Activated T-helper 2 cell treated with anti-CD3 and anti-CD28 coated beads, Interferon-gamma antibody, Interleukin-2, Interleukin-4, amounts not matched to agents 10 μg/mL and 5 μg/mL and 100 μg/mL, durations not matched to agents 14 hours and 24 hours and 36 hours (primary cell): ENCODE measurements at regions of chr6 and their contacts with region 1.

Region 1: GRCh38 chr6:48378884-48379407 is 267.9 kb upstream of the PTCHD4 start:
- DNase-seq: no peak
- H3K4me3 Mint-ChIP-seq: no peak overlapping the region
- H3K27ac Mint-ChIP-seq: no peak overlapping the region
- H3K4me1 Mint-ChIP-seq: no peaks in the 10 kb centered on the region
- H3K27me3 Mint-ChIP-seq: no peaks in the 10 kb centered on the region

Region 2: DNA sequence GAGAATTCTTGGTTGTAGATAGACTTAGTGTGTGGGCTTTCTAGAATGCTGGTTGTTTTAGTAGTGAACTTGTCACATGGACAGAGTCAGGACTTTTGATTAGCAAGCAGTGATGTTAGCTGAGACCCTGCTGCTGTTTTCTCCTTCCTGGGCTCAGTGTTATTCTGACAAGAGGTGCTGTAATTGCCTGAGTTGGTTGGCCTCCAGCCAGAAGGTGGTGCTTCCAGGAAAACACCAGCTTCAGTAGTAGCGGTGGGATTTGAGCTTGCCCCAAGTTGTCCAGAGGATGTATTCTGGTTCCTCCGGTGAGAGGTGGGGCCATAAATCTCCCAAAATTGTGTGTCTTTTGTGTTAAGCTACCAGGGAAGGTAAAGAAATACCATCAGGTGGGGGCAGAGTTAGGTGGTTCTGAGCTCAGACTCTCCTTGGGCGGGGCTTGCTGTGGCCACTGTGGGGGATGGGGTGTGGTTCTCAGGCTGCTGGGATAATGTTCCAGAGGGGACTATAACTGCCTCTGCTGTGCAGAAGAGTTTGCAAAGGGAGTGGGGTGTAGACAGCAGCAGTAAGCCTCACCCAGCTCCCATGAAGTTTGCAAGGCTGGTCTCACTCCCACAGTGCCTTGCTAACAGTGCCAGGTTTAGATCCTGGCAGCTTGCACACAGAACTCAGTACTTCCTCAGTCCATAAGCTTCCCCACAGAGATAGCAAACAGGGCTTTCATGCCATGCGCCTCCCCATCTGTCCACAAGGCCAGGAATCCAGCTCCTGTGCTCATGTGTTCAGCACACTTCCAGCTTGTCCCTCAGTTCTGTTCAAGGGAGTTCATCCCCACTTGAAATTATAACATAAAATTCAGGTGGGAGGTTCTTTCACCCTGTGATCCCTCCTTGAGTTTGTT is 10.4 kb after region 1 on chr6:
- intact Hi-C with region 1: no loop called
- DNase-seq: no peak
- H3K4me3 Mint-ChIP-seq: no peak overlapping the region
- H3K27ac Mint-ChIP-seq: no peak overlapping the region
- H3K4me1 Mint-ChIP-seq: no peaks in the 10 kb centered on the region
- H3K27me3 Mint-ChIP-seq: no peaks in the 10 kb centered on the region

Region 3: GRCh38 chr6:48933136-48933535 is 554.2 kb after region 1 on chr6:
- intact Hi-C with region 1: loop called (anchors 5 kb)
- DNase-seq: no peak
- H3K4me3 Mint-ChIP-seq: no peak overlapping the region
- H3K27ac Mint-ChIP-seq: no peak overlapping the region
- H3K4me1 Mint-ChIP-seq: no peaks in the 10 kb centered on the region
- H3K27me3 Mint-ChIP-seq: no peaks in the 10 kb centered on the region